Naive thymus-derived CD4-positive, alpha-beta T cell (primary cell): ENCODE measurements at regions of chr22 and their contacts with region 1.

Region 1: DNA sequence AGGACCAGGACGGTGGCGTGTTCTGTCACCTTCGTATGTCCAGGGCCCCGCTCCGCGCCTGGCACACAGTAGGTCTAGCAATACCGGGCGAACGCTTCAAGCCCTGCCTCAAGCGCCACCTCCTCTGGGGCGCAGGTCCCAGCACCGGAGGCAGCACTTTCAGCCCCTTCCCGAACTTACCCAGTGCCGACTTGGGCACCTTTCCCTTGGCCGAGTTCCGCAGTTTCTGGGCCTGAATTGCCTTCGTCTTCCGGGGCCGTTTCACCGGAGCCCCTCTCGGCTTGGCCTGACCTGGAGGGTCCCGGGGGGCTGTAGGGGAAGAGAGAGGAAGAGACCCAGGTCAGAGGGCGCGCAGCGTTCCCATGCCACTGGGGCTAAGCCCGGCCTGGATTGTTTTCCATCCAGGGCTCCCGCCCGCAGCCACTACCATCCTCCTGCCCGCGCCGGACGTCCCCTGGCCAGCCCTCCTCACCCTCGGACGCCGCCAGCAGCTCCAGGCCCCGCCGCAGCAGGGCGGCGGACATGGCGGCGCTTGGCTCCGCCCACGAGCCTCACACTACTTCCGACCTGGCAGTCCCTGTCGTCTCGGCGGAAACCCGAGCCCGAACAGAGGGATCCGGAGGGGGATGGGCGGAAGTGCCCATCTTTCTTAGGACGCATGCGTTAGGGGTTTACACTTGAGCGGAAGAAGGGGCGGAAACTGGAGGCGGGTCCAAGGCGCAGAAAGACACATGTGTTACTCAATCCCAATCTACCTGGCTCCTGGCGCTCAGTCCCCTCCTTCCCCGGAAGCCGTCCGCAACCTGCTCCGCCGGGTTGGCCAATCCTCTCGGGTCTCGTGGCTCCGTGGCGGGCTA is at the start of gene RPS19BP1:
- DNase-seq: peak; percentile 92 to 100 (median 99)
- ATAC-seq: peak; percentile 89
- H3K4me3 ChIP-seq: peak within 1 kb of the TSS; percentile 92
- H3K4me3 Mint-ChIP-seq: peak within 1 kb of the TSS; percentile 92 to 98 (median 95)
- H3K27ac ChIP-seq: peak within 1 kb of the TSS; percentile 95
- H3K27ac Mint-ChIP-seq: peak within 1 kb of the TSS; percentile 85 to 98 (median 95)
- H3K4me1 ChIP-seq: peaks cover 39 to 53% of the 10 kb centered on the region in 2 donors
- H3K4me1 Mint-ChIP-seq: peaks cover 41 to 60% (median 52%) of the 10 kb centered on the region in 7 donors
- H3K27me3 ChIP-seq: no peaks in the 10 kb centered on the region
- H3K27me3 Mint-ChIP-seq: peaks cover 0 to 4% (median 0%) of the 10 kb centered on the region in 5 donors
- total RNA-seq, gene RPS19BP1: 35.2 to 67.4 (median 61.5) TPM

Region 2: DNA sequence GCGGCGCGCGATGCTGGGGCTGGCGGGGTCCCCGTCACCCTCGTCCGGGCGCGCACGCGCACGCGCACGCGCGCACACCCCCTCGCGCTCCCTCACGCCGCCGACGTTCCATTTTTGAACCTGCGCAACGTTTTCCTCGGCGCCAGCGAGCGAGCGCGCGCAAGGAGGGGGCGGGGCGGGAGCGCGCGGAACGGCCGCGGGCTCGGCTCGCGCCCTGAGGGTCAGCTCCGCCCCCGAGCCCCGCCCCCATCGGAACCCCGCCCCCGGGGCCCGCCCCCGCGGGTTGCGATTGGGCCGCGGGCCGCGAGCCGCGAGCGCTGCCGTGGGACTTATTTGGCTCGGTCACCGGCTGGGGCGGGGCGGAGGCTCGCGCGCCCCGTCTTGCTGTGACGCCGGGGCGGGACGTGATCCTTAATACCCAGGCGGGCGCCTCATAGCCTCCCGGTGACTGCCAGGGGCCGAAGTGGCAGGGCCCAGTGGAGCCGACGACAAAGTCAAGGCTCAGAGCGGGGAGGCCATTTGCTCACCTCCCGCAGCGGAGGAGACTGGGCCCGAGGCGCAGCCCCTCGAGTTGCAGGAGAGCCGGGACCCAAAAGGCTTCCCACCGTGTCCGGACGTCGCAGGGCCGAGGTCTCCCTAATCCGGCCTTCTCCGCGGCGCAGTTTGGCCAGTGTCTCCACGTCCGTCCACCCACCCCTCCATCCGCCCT is 379.8 kb before region 1 on chr22 and contains the start of gene CBX7:
- CTCF ChIA-PET with region 1: no interaction called
- POLR2A ChIA-PET with region 1: no interaction called
- intact Hi-C with region 1: loop called in 1 of 2 experiments (anchors 5 kb)
- DNase-seq: peak; percentile 91 to 98 (median 94)
- ATAC-seq: peak; percentile 93
- H3K4me3 ChIP-seq: peak within 1 kb of the TSS; percentile 95
- H3K4me3 Mint-ChIP-seq: peak within 1 kb of the TSS; percentile 83 to 99 (median 92)
- H3K27ac ChIP-seq: peak within 1 kb of the TSS; percentile 89
- H3K27ac Mint-ChIP-seq: peak within 1 kb of the TSS; percentile 87 to 96 (median 91)
- H3K4me1 ChIP-seq: peaks cover 31 to 46% of the 10 kb centered on the region in 2 donors
- H3K4me1 Mint-ChIP-seq: peaks cover 7 to 41% (median 35%) of the 10 kb centered on the region in 7 donors
- H3K27me3 ChIP-seq: no peaks in the 10 kb centered on the region
- H3K27me3 Mint-ChIP-seq: peaks cover 0 to 41% (median 0%) of the 10 kb centered on the region in 5 donors
- total RNA-seq, gene CBX7: 14.2 to 164 (median 76.9) TPM

Region 3: GRCh38 chr22:39388261-39389011 is 144.0 kb before region 1 on chr22:
- CTCF ChIA-PET with region 1: no interaction called
- POLR2A ChIA-PET with region 1: no interaction called
- intact Hi-C with region 1: loop called in 1 of 2 experiments (anchors 1 kb)
- DNase-seq: peak in 8 of 9 donors; percentile 16 to 89 (median 77)
- ATAC-seq: peak; percentile 96
- H3K4me3 ChIP-seq: peak overlapping the region; percentile 56
- H3K4me3 Mint-ChIP-seq: peak overlapping the region; percentile 57 to 98 (median 90)
- H3K27ac ChIP-seq: peak overlapping the region; percentile 87
- H3K27ac Mint-ChIP-seq: peak overlapping the region in 8 of 9 donors; percentile 51 to 99 (median 94)
- H3K4me1 ChIP-seq: peaks cover 0 to 4% of the 10 kb centered on the region in 2 donors
- H3K4me1 Mint-ChIP-seq: peaks cover 6 to 31% (median 18%) of the 10 kb centered on the region in 7 donors
- H3K27me3 ChIP-seq: no peaks in the 10 kb centered on the region
- H3K27me3 Mint-ChIP-seq: peaks cover 0 to 4% (median 0%) of the 10 kb centered on the region in 5 donors

Region 4: GRCh38 chr22:39418696-39419095 is 113.7 kb before region 1 on chr22:
- CTCF ChIA-PET with region 1: no interaction called
- POLR2A ChIA-PET with region 1: no interaction called
- intact Hi-C with region 1: no loop called
- DNase-seq: no peak
- ATAC-seq: no peak
- H3K4me3 ChIP-seq: no peak overlapping the region
- H3K4me3 Mint-ChIP-seq: no peak overlapping the region
- H3K27ac ChIP-seq: no peak overlapping the region
- H3K27ac Mint-ChIP-seq: peak overlapping the region in 3 of 9 donors; percentile 5 to 21 (median 14)
- H3K4me1 ChIP-seq: peaks cover 0 to 34% of the 10 kb centered on the region in 2 donors
- H3K4me1 Mint-ChIP-seq: peaks cover 10 to 65% (median 42%) of the 10 kb centered on the region in 7 donors
- H3K27me3 ChIP-seq: no peaks in the 10 kb centered on the region
- H3K27me3 Mint-ChIP-seq: no peaks in the 10 kb centered on the region

Region 5: DNA sequence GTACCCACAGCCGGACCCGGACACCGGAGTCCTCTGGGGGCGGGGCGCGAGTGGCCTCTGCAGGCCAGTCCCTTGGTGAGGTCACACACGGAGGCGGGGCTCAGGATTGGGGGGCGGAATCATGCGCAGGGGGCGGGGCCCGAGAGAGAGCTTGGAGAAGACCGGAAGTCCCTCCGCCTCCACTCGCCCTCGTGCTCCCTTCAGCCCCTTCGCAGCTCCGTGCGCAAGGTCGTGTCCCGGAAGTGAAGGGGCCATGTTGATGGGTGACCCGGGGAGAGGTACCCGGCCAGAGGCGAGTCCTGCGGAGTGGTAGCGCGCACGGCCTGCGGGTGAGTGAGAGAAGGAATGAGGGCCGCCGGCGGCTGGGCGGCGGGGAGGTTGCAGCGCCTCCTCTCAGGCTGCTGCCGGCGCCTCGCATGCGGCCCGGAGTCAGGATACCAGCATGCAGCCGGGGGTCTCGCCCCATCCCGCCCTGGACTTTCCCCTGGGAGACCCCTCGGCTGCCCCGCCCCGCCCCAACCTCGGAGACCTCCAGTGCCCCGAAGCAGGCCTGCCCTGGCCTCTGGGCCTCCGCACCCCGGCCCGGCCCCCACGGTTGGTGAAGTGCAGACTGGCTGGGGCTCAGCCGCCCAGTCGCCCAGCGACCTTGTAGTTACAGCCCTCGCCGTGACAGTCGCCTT is 30.2 kb before region 1 on chr22 and contains the start of gene MIEF1:
- CTCF ChIA-PET with region 1: interaction called, 120 read pairs
- POLR2A ChIA-PET with region 1: interaction called, 16 read pairs
- intact Hi-C with region 1: loop called (anchors 1 kb)
- DNase-seq: peak; percentile 71 to 95 (median 78)
- ATAC-seq: peak; percentile 99
- H3K4me3 ChIP-seq: peak within 1 kb of the TSS; percentile 59
- H3K4me3 Mint-ChIP-seq: peak within 1 kb of the TSS; percentile 75 to 100 (median 94)
- H3K27ac ChIP-seq: peak within 1 kb of the TSS; percentile 79
- H3K27ac Mint-ChIP-seq: peak within 1 kb of the TSS; percentile 86 to 97 (median 96)
- H3K4me1 ChIP-seq: peaks cover 16 to 21% of the 10 kb centered on the region in 2 donors
- H3K4me1 Mint-ChIP-seq: peaks cover 23 to 57% (median 47%) of the 10 kb centered on the region in 7 donors
- H3K27me3 ChIP-seq: no peaks in the 10 kb centered on the region
- H3K27me3 Mint-ChIP-seq: peaks cover 0 to 7% (median 0%) of the 10 kb centered on the region in 5 donors
- total RNA-seq, gene MIEF1: 17.5 to 42.3 (median 37.3) TPM

Region 6: DNA sequence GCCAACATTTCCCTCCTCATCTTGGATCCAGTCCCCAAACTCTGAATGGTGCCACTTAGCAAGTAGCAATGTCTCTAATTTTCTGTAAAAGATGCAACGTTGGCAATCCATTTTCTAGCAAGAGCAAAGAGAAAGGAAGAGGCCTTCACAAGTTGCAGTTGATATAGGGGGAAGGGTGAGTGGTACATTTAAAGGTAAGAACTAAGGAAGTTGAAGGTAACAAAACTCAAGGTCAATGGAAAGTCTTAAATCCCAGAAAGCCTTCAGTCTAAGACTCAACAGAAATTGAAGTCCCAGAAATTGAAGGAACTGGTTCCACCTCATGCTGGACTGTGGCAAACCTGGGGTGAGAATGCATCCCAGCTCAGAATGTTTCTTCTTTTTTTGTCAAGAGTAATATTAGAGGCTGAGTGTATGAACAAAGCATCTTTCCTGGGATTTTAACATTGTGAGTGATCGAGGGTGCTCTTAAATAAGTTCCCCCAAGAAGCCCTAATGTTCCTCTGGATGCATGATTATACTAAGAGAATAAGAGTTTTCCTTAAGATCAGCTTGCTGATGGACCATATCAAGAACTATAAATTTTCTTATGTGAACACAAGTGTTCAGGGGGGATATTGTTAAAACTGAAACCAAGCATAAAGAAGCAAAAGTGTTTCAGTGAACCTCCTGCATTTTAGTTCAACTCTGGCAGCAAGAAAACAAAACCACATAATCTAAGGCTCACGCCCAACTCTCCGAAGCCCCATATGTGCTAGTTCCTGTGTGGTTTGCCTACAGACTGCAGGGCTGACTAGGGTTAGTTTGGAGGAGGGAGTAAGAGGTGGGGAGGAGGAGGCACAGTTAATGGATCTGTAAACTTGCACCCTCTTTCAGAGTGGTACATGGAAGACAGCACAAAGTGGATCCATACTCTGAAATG is 368.1 kb after region 1 on chr22 and contains the start of gene GRAP2:
- CTCF ChIA-PET with region 1: interaction called, 3 read pairs
- POLR2A ChIA-PET with region 1: no interaction called
- intact Hi-C with region 1: loop called (anchors 5 kb)
- DNase-seq: peak in 8 of 9 donors; percentile 52 to 90 (median 86)
- ATAC-seq: peak; percentile 98
- H3K4me3 ChIP-seq: peak within 1 kb of the TSS; percentile 71
- H3K4me3 Mint-ChIP-seq: peak within 1 kb of the TSS in 9 of 10 donors; percentile 95 to 99 (median 97)
- H3K27ac ChIP-seq: peak within 1 kb of the TSS; percentile 83
- H3K27ac Mint-ChIP-seq: peak within 1 kb of the TSS in 6 of 9 donors; percentile 86 to 99 (median 96)
- H3K4me1 ChIP-seq: peaks cover 23 to 27% of the 10 kb centered on the region in 2 donors
- H3K4me1 Mint-ChIP-seq: peaks cover 13 to 31% (median 22%) of the 10 kb centered on the region in 7 donors
- H3K27me3 ChIP-seq: no peaks in the 10 kb centered on the region
- H3K27me3 Mint-ChIP-seq: no peaks in the 10 kb centered on the region
- total RNA-seq, gene GRAP2: 108 to 156 (median 145) TPM

Region 7: DNA sequence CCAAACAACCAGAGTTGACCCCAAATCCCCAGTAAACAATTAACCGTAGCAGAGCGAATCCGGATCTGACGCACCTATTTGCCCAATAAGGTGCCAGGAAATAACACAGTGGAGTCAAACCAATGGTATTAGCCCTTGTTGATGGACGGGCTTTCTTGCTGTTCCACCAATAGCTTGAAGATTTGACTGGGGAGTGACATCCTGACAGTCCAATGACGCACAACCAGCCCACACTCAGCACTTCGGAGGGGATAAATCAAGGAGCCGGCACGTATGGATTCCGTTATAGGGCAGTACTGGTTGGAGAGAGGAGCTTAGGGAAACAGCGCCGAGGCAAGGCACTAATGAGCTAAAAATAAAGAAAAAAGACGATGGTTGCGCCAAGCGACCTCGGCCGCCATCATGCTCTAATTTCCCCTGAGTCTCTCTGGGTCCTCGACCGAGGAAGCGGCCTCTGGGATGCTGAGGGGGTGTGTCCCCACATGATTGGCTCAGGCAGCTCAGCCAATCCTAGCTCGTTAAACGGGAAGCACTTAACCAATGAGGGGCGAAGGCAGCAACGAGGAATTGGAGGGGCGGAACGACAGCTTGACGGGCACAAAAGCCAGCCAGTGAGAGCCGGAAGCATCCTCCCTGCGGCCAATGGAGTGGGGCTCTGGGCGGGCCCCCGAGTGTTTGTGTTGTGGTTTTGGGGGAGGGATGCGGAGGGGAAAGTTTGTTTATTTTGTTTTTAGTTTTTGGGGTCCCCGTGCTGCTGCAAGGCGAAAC is 511.8 kb after region 1 on chr22:
- CTCF ChIA-PET with region 1: interaction called, 10 read pairs
- POLR2A ChIA-PET with region 1: interaction called, 17 read pairs
- intact Hi-C with region 1: loop called (anchors 1 kb)
- DNase-seq: peak; percentile 87 to 100 (median 99)
- ATAC-seq: peak; percentile 92
- H3K4me3 ChIP-seq: peak overlapping the region; percentile 81
- H3K4me3 Mint-ChIP-seq: peak overlapping the region; percentile 94 to 99 (median 98)
- H3K27ac ChIP-seq: peak overlapping the region; percentile 88
- H3K27ac Mint-ChIP-seq: peak overlapping the region; percentile 98 to 100 (median 99)
- H3K4me1 ChIP-seq: peaks cover 15 to 29% of the 10 kb centered on the region in 2 donors
- H3K4me1 Mint-ChIP-seq: peaks cover 23 to 53% (median 40%) of the 10 kb centered on the region in 7 donors
- H3K27me3 ChIP-seq: no peaks in the 10 kb centered on the region
- H3K27me3 Mint-ChIP-seq: peaks cover 3 to 17% (median 7%) of the 10 kb centered on the region in 5 donors

Region 8: GRCh38 chr22:40525249-40525884 is 992.9 kb after region 1 on chr22:
- CTCF ChIA-PET with region 1: no interaction called
- POLR2A ChIA-PET with region 1: no interaction called
- intact Hi-C with region 1: loop called in 1 of 2 experiments (anchors 5 kb)
- DNase-seq: peak; percentile 58 to 80 (median 76)
- ATAC-seq: peak; percentile 74
- H3K4me3 ChIP-seq: no peak overlapping the region
- H3K4me3 Mint-ChIP-seq: peak overlapping the region in 1 of 10 donors; percentile 48
- H3K27ac ChIP-seq: no peak overlapping the region
- H3K27ac Mint-ChIP-seq: peak overlapping the region in 8 of 9 donors; percentile 7 to 86 (median 58)
- H3K4me1 ChIP-seq: peaks cover 0 to 11% of the 10 kb centered on the region in 2 donors
- H3K4me1 Mint-ChIP-seq: peaks cover 13 to 55% (median 51%) of the 10 kb centered on the region in 7 donors
- H3K27me3 ChIP-seq: no peaks in the 10 kb centered on the region
- H3K27me3 Mint-ChIP-seq: no peaks in the 10 kb centered on the region